ENCODE measurements at regions of chr2 and their contacts with region 1.

Region 1: DNA sequence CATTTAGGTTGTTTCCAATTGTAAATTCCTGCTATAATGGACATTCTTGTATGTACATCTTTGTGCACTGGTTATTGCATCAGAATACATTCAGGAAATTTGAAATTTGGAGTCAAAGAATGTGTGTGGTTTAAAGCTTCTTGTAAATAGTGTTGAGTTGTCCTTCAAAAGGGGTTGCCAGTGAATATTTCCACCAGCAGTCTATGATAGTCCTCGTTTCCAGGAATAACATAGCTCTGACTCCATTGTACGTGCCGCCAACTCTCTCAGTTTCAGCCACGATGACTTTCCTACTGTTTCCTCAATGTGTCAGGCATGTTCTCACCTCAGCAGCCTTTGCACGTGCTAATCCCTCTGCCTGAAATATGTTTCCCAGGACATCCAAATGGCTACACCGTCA is 10.9 kb upstream of the HS6ST1 start:
- DNase-seq: no peak
- H3K4me3 ChIP-seq: no peak overlapping the region
- H3K27ac ChIP-seq: no peak overlapping the region
- H3K4me1 ChIP-seq: peaks cover 16% of the 10 kb centered on the region
- H3K27me3 ChIP-seq: no peaks in the 10 kb centered on the region
- CTCF ChIP-seq: no peak

Region 2: GRCh38 chr2:128746356-128746755 is 416.7 kb after region 1 on chr2:
- intact Hi-C with region 1: loop called (anchors 10 kb)
- DNase-seq: no peak
- H3K4me3 ChIP-seq: no peak overlapping the region
- H3K27ac ChIP-seq: no peak overlapping the region
- H3K4me1 ChIP-seq: no peaks in the 10 kb centered on the region
- H3K27me3 ChIP-seq: no peaks in the 10 kb centered on the region
- CTCF ChIP-seq: no peak